ENCODE measurements at regions of chr5 and their contacts with region 1.

Region 1: DNA sequence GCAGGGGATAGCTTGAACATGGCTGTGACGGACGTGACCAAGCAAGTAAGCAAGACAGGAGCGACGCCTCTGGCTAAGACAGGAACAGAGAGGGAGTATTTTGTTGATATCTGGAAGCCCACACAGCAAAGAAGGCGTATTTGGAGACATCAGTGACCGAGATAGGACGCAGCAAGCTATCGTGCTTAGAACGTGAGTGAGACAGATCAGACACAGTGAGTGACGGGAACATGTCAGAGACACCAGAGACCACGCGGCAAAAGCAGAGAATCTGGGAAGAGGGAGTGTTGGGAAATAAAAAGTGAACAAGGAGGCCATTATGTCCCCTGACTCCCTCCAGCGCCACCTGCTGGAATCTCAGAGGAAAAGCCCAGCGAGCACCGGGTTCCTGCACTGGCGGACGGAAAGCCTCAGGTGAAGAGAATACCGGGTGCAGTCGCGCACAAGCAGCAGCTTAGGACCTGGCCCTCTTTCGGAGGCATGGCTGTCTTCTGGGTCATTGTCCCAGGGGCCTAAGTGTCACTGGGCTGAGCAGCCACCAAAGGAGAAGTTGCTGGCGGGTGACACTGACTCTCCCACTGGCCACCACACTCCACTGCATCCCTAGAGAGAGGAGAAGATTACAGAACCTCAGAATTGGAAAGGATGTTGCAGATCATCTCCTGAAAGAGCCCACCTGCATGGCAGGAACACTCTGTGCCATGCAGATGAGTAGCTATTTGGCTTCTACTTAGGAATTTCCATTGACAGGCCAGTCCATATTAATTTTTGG is 99.1 kb downstream of the FBXO38 start:
- DNase-seq: peak; percentile 69 to 72
- ATAC-seq: peak; percentile 93 to 96
- H3K4me3 ChIP-seq: peak overlapping the region; percentile 46
- H3K27ac ChIP-seq: no peak overlapping the region; a peak in 1 of 6 replicates
- H3K4me1 ChIP-seq: 0 out of 3 replicates have a peak, but pooled peaks cover 3% of the 10 kb centered on the region
- CTCF ChIP-seq: peak; percentile 79
- EP300 ChIP-seq: no peak
- POLR2A ChIP-seq: no peak
- RAD21 ChIP-seq: peak; percentile 47 to 49; a peak in 4 of 5 replicates

Region 2: GRCh38 chr5:148469501-148469935 is 13.4 kb before region 1 on chr5:
- CTCF ChIA-PET with region 1: interaction called, 26 read pairs
- POLR2A ChIA-PET with region 1: no interaction called
- DNase-seq: no peak
- ATAC-seq: no peak
- H3K4me3 ChIP-seq: no peak overlapping the region
- H3K27ac ChIP-seq: no peak overlapping the region
- H3K4me1 ChIP-seq: no peaks in the 10 kb centered on the region
- CTCF ChIP-seq: no peak
- EP300 ChIP-seq: no peak
- POLR2A ChIP-seq: no peak
- RAD21 ChIP-seq: no peak

Region 3: DNA sequence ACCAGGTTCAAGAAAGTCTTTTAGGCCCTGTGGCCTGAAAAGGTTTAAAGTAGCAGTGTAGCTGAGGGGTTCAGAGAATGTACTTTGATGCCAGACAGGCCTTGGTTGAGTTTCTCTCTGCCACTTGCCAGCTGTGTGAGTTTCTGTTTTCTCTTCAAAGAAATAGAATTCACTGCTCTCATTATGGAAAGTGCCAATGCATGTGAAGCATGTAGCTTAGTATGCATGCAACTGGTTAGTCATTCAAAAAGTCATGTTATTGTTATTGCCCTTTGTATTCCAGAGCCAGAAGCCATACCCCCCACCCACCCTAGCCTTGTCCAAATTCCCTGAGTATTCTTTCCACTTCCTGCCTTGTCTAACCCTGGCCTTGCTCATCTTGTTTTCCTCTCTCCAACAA is 445.3 kb after region 1 on chr5:
- CTCF ChIA-PET with region 1: no interaction called
- POLR2A ChIA-PET with region 1: no interaction called
- DNase-seq: no peak
- ATAC-seq: no peak
- H3K4me3 ChIP-seq: no peak overlapping the region
- H3K27ac ChIP-seq: no peak overlapping the region
- H3K4me1 ChIP-seq: no peaks in the 10 kb centered on the region
- CTCF ChIP-seq: no peak
- EP300 ChIP-seq: no peak
- POLR2A ChIP-seq: no peak
- RAD21 ChIP-seq: no peak

Measured in A549 (cell line).